Activated T-helper 1 cell treated with anti-CD3 and anti-CD28 coated beads, Interleukin-12 subunit alpha, Interleukin-12 subunit beta, Interleukin-2, Interleukin-4 antibody, amounts not matched to agents 30 ng/mL and 10 ng/mL and 1 ng/mL, durations not matched to agents 14 hours and 24 hours and 36 hours (primary cell): ENCODE measurements at regions of chr7 and their contacts with region 1.

Region 1: GRCh38 chr7:76074954-76075335 is 27.0 kb downstream of the MDH2 start:
- DNase-seq: no peak
- H3K4me3 Mint-ChIP-seq: no peak overlapping the region
- H3K27ac Mint-ChIP-seq: no peak overlapping the region
- H3K4me1 Mint-ChIP-seq: peaks cover 18% of the 10 kb centered on the region
- H3K27me3 Mint-ChIP-seq: no peaks in the 10 kb centered on the region

Region 2: GRCh38 chr7:76133164-76133775 is 58.3 kb after region 1 on chr7:
- intact Hi-C with region 1: loop called (anchors 5 kb)
- DNase-seq: no peak
- H3K4me3 Mint-ChIP-seq: peak overlapping the region; percentile 63
- H3K27ac Mint-ChIP-seq: peak overlapping the region; percentile 79
- H3K4me1 Mint-ChIP-seq: peaks cover 37% of the 10 kb centered on the region
- H3K27me3 Mint-ChIP-seq: peaks cover 2% of the 10 kb centered on the region